Panc1 (cell line): ENCODE measurements at regions of chr2 and their contacts with region 1.

Region 1: GRCh38 chr2:240513549-240514287 is 44.1 kb downstream of the ANKMY1 start:
- DNase-seq: peak; percentile 35
- ATAC-seq: peak; percentile 96
- H3K4me3 ChIP-seq: no peak overlapping the region
- H3K27ac ChIP-seq: no peak overlapping the region
- H3K4me1 ChIP-seq: no peaks in the 10 kb centered on the region
- H3K27me3 ChIP-seq: no peaks in the 10 kb centered on the region
- CTCF ChIP-seq: peak; percentile 95

Region 2: DNA sequence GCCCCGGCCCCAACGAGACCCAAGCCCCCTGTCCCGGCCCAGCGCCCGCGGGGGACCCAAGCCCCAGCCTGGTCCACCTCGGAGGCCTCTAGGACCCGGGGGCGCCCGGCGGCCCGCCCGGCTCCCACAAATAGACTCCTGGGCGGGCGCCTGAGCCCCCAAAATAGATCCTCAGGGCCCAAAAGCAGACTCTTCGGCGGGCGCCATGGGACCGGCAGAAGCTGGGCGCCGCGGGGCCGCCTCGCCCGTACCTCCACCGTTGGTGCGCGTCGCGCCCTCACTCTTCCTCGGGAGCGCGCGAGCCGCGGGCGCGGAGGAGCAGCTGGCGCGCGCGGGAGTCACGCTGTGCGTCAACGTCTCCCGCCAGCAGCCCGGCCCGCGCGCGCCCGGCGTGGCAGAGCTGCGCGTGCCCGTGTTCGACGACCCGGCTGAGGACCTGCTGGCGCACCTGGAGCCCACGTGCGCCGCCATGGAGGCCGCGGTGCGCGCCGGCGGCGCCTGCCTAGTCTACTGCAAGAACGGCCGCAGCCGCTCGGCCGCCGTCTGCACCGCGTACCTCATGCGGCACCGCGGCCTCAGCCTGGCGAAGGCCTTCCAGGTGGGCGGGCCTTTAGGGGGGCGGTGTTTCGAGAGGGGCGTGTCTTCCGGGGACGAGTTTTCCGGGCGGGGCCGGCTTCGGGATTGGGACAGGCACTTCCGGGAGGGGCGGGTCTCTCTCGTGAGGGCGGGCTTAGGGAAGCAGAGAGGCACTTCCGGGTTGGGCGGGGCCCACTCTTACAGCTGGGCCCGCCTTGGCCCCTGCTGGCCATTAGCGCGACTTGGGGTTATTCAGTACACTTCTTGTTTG is 47.0 kb after region 1 on chr2:
- CTCF ChIA-PET with region 1: interaction called, 8 read pairs
- POLR2A ChIA-PET with region 1: no interaction called
- in situ Hi-C with region 1: no loop called
- intact Hi-C with region 1: loop called (anchors 5 kb)
- DNase-seq: peak; percentile 84
- ATAC-seq: peak; percentile 83
- H3K4me3 ChIP-seq: peak overlapping the region; percentile 74 to 84
- H3K27ac ChIP-seq: peak overlapping the region; percentile 92
- H3K4me1 ChIP-seq: peaks cover 41% of the 10 kb centered on the region
- H3K27me3 ChIP-seq: no peaks in the 10 kb centered on the region
- CTCF ChIP-seq: peak; percentile 23

Region 3: DNA sequence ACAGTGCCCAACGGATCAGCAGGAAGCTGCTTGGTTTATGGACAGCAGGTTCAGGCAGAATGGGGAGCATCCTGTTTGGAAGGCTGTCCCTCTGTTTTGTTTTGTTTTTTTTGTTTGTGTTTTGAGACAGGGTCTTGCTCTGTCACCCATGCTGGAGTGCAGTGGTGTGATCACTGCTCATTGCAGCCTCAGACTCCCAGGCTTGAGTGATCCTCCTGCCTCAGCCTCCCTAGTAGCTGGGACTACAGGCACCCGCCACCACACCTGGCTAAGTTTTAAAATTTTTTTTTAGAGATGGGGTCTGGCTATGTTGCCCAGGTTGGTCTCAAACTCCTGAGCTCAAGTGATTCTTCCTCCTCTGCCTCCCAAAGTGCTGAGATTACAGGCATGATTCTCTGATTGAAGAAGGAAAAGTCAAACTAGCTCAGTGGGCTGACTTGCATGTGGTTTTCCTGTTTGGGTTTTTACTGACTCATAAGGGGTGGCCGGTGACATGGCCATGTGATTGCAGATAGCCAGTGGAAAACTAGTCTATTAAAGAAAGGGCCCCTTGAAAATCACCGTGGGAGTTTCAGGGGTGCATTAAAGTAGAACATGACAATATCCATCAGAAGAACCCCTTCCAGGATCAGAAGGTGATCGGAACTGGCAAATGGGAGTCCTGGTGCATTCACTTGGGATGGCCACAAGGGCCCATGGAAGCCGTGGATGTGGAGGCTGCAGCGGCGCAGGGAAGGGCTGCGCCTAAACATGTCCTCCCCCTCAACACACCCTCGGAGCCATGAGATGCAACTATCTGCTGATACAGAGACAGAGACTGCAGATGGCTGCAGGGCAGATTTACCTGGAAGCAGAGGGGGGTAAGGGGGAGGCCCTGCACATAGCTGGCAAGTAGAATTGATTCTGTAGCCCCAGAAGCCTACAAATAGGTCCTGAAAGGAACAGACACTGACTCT is 142.5 kb after region 1 on chr2:
- CTCF ChIA-PET with region 1: no interaction called
- POLR2A ChIA-PET with region 1: no interaction called
- in situ Hi-C with region 1: no loop called
- intact Hi-C with region 1: no loop called
- DNase-seq: no peak
- ATAC-seq: no peak
- H3K4me3 ChIP-seq: no peak overlapping the region
- H3K27ac ChIP-seq: no peak overlapping the region
- H3K4me1 ChIP-seq: no peaks in the 10 kb centered on the region
- H3K27me3 ChIP-seq: peaks cover 24% of the 10 kb centered on the region
- CTCF ChIP-seq: no peak